ENCODE measurements at regions of chr3 and their contacts with region 1.

Region 1: DNA sequence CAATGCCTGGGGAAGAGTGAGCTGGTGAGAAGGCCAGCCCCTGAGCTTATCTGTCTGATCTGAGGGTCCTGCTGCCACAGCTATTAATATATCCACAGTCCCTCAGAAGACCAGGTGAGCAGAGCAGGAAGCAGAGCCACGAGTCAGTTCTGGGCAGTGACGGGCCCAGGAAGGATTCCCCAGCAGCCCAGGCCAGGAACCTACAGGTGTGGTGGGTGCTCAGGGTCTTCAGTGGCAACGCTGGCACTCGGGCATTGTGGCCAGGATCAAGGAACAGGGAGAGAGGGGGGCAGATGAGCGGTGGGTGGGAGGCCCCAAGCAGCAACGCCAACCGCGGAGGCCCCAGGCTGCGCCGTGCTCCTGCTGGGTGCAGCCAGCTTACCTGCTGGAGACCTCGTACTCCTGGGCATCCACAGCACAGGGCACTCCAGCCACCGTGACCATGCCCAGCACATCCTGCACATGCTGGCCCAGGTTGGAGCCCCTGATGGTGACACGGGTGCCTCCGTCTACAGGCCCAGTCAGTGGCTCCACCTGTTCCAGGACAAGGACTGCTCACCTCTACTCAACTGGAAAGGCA is 12.3 kb downstream of the PLXNB1 start:
- DNase-seq: no peak
- ATAC-seq: no peak
- H3K4me3 ChIP-seq: no peak overlapping the region
- H3K4me3 Mint-ChIP-seq: no peak overlapping the region
- H3K27ac ChIP-seq: no peak overlapping the region
- H3K27ac Mint-ChIP-seq: no peak overlapping the region
- H3K4me1 ChIP-seq: peaks cover 0 to 3% of the 10 kb centered on the region in 2 experiments
- H3K4me1 Mint-ChIP-seq: no peaks in the 10 kb centered on the region
- H3K27me3 ChIP-seq: peaks cover 0 to 4% of the 10 kb centered on the region in 2 experiments
- H3K27me3 Mint-ChIP-seq: no peaks in the 10 kb centered on the region

Region 2: GRCh38 chr3:48394391-48394790 is 23.2 kb before region 1 on chr3:
- CTCF ChIA-PET with region 1: no interaction called
- POLR2A ChIA-PET with region 1: no interaction called
- DNase-seq: no peak
- ATAC-seq: no peak
- H3K4me3 ChIP-seq: no peak overlapping the region
- H3K4me3 Mint-ChIP-seq: no peak overlapping the region
- H3K27ac ChIP-seq: no peak overlapping the region
- H3K27ac Mint-ChIP-seq: no peak overlapping the region
- H3K4me1 ChIP-seq: no peaks in the 10 kb centered on the region
- H3K4me1 Mint-ChIP-seq: no peaks in the 10 kb centered on the region
- H3K27me3 ChIP-seq: peaks cover 0 to 21% of the 10 kb centered on the region in 2 experiments
- H3K27me3 Mint-ChIP-seq: peaks cover 10 to 17% of the 10 kb centered on the region in 2 donors

Region 3: DNA sequence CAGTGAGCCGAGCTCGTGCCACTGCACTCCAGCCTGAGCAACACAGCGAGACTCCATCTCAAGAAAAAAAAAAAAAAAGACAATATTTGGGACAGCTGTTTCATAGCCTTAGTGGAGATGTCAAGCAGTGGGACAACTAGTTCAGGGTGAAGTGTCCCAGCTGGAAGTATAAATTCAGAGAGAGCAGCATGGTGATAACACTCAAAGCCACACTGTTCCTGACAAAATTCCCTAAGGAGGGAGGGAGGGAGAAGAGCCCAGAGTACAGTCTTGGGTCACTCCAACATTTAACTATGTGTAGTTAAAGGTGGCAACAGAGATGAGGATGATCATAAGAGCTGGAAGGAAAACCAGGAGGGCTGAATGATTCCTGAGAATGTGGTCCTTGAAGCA is 320.5 kb after region 1 on chr3:
- CTCF ChIA-PET with region 1: no interaction called
- POLR2A ChIA-PET with region 1: interaction called in 1 of 2 experiments, 11 read pairs
- DNase-seq: no peak
- ATAC-seq: no peak
- H3K4me3 ChIP-seq: no peak overlapping the region
- H3K4me3 Mint-ChIP-seq: no peak overlapping the region
- H3K27ac ChIP-seq: no peak overlapping the region
- H3K27ac Mint-ChIP-seq: no peak overlapping the region
- H3K4me1 ChIP-seq: peaks cover 0 to 7% of the 10 kb centered on the region in 2 experiments
- H3K4me1 Mint-ChIP-seq: peaks cover 0 to 3% (median 3%) of the 10 kb centered on the region in 3 donors
- H3K27me3 ChIP-seq: no peaks in the 10 kb centered on the region
- H3K27me3 Mint-ChIP-seq: no peaks in the 10 kb centered on the region

Measured in T-cell (primary cell).